ENCODE measurements at regions of chr19 and their contacts with region 1.

Region 1: DNA sequence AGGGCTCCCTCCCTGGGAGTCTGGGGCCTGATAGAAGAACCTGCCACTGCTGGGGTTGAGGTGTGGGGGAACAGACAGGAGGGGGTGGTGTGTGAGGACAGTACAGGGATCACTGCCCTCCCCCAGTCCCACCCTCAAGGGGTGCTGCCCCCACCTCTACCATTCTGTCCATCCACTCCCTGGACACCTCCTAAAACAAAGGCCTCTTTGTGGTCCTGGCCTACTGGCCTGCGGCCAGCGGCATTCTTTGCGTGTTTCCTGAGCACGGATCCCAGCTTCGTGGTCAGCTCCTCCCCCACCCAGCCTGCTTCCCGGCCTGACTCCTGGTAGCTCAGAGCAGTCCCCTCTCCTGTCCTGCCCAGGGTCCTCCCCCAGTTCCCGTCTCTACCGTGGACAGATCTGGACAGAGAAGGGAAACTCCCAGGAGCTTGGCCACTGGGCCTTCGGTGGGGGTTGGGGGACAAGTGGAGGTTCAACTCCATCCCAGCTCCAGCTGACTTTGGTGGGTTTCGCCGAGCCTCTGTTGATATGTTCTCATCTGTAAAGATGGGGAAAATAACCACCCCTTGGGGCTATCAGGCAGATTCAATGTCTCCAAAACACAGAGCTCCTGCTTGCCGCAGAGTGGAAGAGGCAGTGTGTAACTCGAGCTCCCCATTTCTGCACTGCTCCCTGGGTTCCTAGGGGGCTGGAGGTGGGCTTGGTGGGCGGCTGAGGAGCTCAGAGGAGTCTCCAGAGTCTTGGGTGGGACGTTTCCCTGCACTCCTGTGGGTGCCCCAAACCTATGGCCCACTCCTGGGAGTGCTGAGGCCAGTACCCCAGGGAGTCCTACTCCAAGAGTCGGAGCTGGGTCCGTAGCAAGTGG is 48.7 kb downstream of the LYL1 start:
- DNase-seq: no peak
- H3K4me3 ChIP-seq: no peak overlapping the region
- H3K27ac ChIP-seq: no peak overlapping the region
- H3K4me1 ChIP-seq: peaks cover 7 to 42% (median 39%) of the 10 kb centered on the region in 4 experiments
- H3K27me3 ChIP-seq: peaks cover 87 to 100% (median 98%) of the 10 kb centered on the region in 4 experiments
- CTCF ChIP-seq: no peak
- EP300 ChIP-seq: no peak
- POLR2A ChIP-seq: no peak
- RAD21 ChIP-seq: no peak

Region 2: DNA sequence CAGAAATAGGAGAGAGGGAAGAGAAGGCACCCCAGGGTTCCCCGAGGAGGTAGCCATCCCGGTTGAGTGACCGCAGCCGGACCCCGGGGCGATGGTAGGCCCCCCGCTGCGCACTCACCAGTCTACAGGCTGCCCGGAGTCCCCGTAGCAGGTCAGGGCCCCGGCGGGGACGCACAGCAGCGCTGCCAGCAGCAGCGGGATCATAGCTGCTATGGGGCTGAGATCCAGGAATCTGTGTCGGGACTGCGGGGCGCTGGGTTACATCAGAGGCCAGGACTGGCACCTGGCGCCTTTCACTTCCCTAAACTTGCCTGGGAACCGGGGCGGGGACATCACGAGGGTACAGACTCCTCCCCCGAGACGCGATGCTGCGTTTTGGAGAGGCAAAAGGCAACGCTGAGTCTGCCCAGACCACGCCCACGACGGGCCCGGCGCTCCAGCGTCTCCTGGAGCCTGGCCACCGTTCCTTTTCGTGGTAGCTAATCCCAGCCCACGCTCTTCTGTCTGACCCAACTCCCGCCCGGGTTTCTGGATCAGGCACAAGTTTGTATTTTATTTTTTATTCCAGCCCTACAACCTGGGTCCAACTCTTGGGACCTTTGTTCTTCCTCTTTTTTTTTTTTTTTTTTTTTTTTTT is 172.7 kb before region 1 on chr19 and contains the start of gene DNASE2:
- CTCF ChIA-PET with region 1: no interaction called
- POLR2A ChIA-PET with region 1: no interaction called
- DNase-seq: peak; percentile 85 to 95
- H3K4me3 ChIP-seq: peak within 1 kb of the TSS; percentile 85 to 92 (median 88)
- H3K27ac ChIP-seq: peak within 1 kb of the TSS; percentile 20; the same call in 1 of the 2 replicates
- H3K4me1 ChIP-seq: peaks cover 0 to 7% (median 6%) of the 10 kb centered on the region in 4 experiments; a peak in 5 of 7 replicates
- H3K27me3 ChIP-seq: peaks cover 0 to under 1% (median under 1%) of the 10 kb centered on the region in 4 experiments; a peak in 1 of 7 replicates
- CTCF ChIP-seq: no peak
- EP300 ChIP-seq: peak in 1 of 2 experiments; percentile 15; a peak in 1 of 3 replicates
- POLR2A ChIP-seq: peak in 1 of 2 experiments; percentile 78; a peak in 2 of 3 replicates
- RAD21 ChIP-seq: no peak
- total RNA-seq, gene DNASE2: 32.9 and 33.2 TPM in 2 replicates

Region 3: GRCh38 chr19:12891553-12892021 is 162.4 kb before region 1 on chr19:
- CTCF ChIA-PET with region 1: no interaction called
- POLR2A ChIA-PET with region 1: no interaction called
- DNase-seq: no peak
- H3K4me3 ChIP-seq: peak overlapping the region; percentile 81 to 98 (median 92)
- H3K27ac ChIP-seq: peak overlapping the region; percentile 65
- H3K4me1 ChIP-seq: peaks cover 0 to 6% (median 4%) of the 10 kb centered on the region in 4 experiments; a peak in 3 of 7 replicates
- H3K27me3 ChIP-seq: peaks cover 0 to 5% (median 2%) of the 10 kb centered on the region in 4 experiments; a peak in 4 of 7 replicates
- CTCF ChIP-seq: no peak
- EP300 ChIP-seq: no peak
- POLR2A ChIP-seq: no peak
- RAD21 ChIP-seq: no peak

Region 4: GRCh38 chr19:13022859-13023636 is 30.9 kb before region 1 on chr19:
- CTCF ChIA-PET with region 1: interaction called, 760 read pairs
- POLR2A ChIA-PET with region 1: interaction called, 12 read pairs
- DNase-seq: no peak
- H3K4me3 ChIP-seq: peak overlapping the region in 2 of 4 experiments; percentile 5 to 46; a peak in 3 of 8 replicates
- H3K27ac ChIP-seq: no peak overlapping the region
- H3K4me1 ChIP-seq: peaks cover 11 to 34% (median 29%) of the 10 kb centered on the region in 4 experiments
- H3K27me3 ChIP-seq: peaks cover 81 to 98% (median 96%) of the 10 kb centered on the region in 4 experiments
- CTCF ChIP-seq: no peak
- EP300 ChIP-seq: no peak
- POLR2A ChIP-seq: no peak
- RAD21 ChIP-seq: no peak

Region 5: DNA sequence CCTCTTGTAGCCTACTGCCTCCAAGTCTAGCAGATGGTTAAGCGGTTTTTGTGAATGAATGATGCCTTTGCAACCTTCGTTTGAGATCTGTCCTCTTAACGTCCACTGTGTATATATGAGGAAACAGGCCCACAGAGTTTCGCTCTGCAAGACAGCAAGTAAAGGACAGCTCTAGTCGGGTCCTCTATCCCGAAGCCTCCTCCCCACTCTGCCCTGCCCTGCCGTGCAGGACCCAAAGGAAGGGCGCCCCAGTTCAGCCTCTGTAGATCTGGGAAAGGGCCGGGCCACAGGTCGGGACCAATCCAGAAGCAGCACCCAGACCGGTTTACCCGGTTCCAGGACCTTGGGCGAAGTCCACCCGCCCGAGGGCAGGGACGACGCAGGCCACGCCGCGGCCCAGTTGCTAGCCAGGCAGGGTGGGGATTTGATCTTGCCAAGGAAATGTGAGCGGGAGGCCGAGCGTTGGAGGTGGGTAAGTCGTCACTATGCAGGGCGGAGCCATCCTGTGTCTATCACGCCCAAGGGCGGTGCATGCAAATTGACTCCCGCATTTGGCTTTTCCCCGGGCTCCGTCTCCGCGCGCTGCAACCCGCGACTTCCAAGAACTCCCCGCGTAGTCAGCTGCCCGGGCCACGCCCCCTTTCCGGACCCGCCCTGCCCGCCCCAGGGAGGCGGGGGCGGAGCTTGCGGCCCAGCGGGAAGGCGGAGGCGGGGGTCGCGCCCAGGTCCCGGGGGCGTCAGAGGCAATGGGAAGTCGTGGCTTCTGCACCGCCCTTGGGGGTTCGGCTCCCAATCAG is 108.7 kb after region 1 on chr19:
- CTCF ChIA-PET with region 1: no interaction called
- POLR2A ChIA-PET with region 1: no interaction called
- DNase-seq: peak; percentile 92 to 96
- H3K4me3 ChIP-seq: peak overlapping the region; percentile 13 to 62 (median 46); a peak in 7 of 8 replicates
- H3K27ac ChIP-seq: peak overlapping the region; percentile 95
- H3K4me1 ChIP-seq: peaks cover 16 to 31% (median 18%) of the 10 kb centered on the region in 4 experiments
- H3K27me3 ChIP-seq: no peaks in the 10 kb centered on the region
- CTCF ChIP-seq: no peak
- EP300 ChIP-seq: no peak
- POLR2A ChIP-seq: peak; percentile 17 to 66; a peak in 2 of 3 replicates
- RAD21 ChIP-seq: no peak; a peak in 1 of 4 replicates

Measured in H1 (cell line).